IMR-90 (cell line): ENCODE measurements at regions of chr14 and their contacts with region 1.

Region 1: GRCh38 chr14:34496679-34497513 is 34.9 kb upstream of the SPTSSA start:
- DNase-seq: peak; percentile 100
- ATAC-seq: peak; percentile 96
- H3K4me3 ChIP-seq: no peak overlapping the region
- H3K27ac ChIP-seq: peak overlapping the region; percentile 98
- H3K4me1 ChIP-seq: peaks cover 12% of the 10 kb centered on the region
- H3K27me3 ChIP-seq: no peaks in the 10 kb centered on the region
- CTCF ChIP-seq: peak; percentile 38
- POLR2A ChIP-seq: peak; percentile 91
- RAD21 ChIP-seq: peak; percentile 49

Region 2: GRCh38 chr14:34331728-34332623 is 164.9 kb before region 1 on chr14:
- CTCF ChIA-PET with region 1: no interaction called
- POLR2A ChIA-PET with region 1: no interaction called
- dilution Hi-C with region 1: no loop called
- in situ Hi-C with region 1: no loop called
- intact Hi-C with region 1: loop called (anchors 1 kb)
- DNase-seq: peak; percentile 62
- ATAC-seq: peak; percentile 77
- H3K4me3 ChIP-seq: no peak overlapping the region
- H3K27ac ChIP-seq: no peak overlapping the region
- H3K4me1 ChIP-seq: peaks cover 3% of the 10 kb centered on the region; the same call in 1 of the 2 replicates
- H3K27me3 ChIP-seq: no peaks in the 10 kb centered on the region
- CTCF ChIP-seq: peak; percentile 61
- POLR2A ChIP-seq: no peak
- RAD21 ChIP-seq: peak; percentile 65

Region 3: GRCh38 chr14:34365309-34365915 is 131.5 kb before region 1 on chr14:
- CTCF ChIA-PET with region 1: no interaction called
- POLR2A ChIA-PET with region 1: no interaction called
- dilution Hi-C with region 1: no loop called
- in situ Hi-C with region 1: no loop called
- intact Hi-C with region 1: loop called (anchors 10 kb)
- DNase-seq: peak; percentile 13
- ATAC-seq: 0 out of 2 replicates have a peak, but pooled peaks have one; percentile 53
- H3K4me3 ChIP-seq: no peak overlapping the region
- H3K27ac ChIP-seq: no peak overlapping the region
- H3K4me1 ChIP-seq: peaks cover 9% of the 10 kb centered on the region; the same call in 1 of the 2 replicates
- H3K27me3 ChIP-seq: no peaks in the 10 kb centered on the region
- CTCF ChIP-seq: 0 out of 2 replicates have a peak, but pooled peaks have one; percentile 26
- POLR2A ChIP-seq: no peak
- RAD21 ChIP-seq: peak; percentile 23; the same call in 1 of the 2 replicates

Region 4: DNA sequence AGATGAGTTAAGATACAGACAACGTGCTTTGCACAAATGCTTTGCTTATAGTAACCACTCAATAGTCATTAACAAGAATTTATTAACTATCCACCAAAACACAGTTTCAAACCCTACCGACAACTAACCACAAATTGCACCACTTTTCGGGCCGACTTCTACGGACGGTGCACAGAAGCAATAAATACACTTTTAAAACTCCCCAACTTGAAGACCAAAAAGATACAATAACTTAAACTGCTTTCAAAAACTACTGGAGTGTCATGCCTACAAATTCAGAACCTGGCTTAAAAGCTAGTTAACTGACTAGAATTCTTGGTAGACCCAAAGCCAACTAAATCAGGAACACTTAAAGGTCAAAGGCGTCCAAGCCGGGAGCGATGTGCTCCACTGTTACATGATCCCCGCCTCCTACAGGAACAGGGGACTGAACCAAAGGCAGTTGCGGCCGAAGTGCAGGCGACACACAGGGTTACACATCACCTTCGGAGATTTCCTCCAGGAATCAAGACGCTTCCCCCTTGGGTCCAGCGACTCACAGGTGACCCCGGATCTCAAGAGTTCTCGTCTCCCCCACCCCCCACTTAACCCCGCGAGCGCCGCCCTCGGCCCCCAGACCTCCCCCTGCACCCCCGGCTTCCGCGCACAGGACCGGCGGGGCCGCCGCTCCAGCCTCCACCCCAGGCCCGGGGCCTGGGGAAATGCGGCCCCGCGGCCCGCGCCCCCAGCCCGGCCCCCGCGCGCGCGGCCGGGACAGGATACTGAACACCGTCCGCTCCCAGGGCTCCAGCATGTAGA is 35.4 kb before region 1 on chr14:
- CTCF ChIA-PET with region 1: no interaction called
- POLR2A ChIA-PET with region 1: no interaction called
- dilution Hi-C with region 1: no loop called
- in situ Hi-C with region 1: loop called (anchors 5 kb)
- intact Hi-C with region 1: loop called (anchors 1 kb)
- DNase-seq: peak; percentile 52
- ATAC-seq: peak; percentile 36
- H3K4me3 ChIP-seq: peak overlapping the region; percentile 82
- H3K27ac ChIP-seq: peak overlapping the region; percentile 80
- H3K4me1 ChIP-seq: peaks cover 6% of the 10 kb centered on the region
- H3K27me3 ChIP-seq: no peaks in the 10 kb centered on the region
- CTCF ChIP-seq: no peak
- POLR2A ChIP-seq: no peak
- RAD21 ChIP-seq: no peak

Region 5: GRCh38 chr14:35600253-35600652 is 1103.4 kb after region 1 on chr14:
- CTCF ChIA-PET with region 1: no interaction called
- POLR2A ChIA-PET with region 1: no interaction called
- dilution Hi-C with region 1: no loop called
- in situ Hi-C with region 1: no loop called
- intact Hi-C with region 1: no loop called
- DNase-seq: no peak
- ATAC-seq: no peak
- H3K4me3 ChIP-seq: no peak overlapping the region
- H3K27ac ChIP-seq: no peak overlapping the region
- H3K4me1 ChIP-seq: no peaks in the 10 kb centered on the region
- H3K27me3 ChIP-seq: no peaks in the 10 kb centered on the region
- CTCF ChIP-seq: no peak
- POLR2A ChIP-seq: no peak
- RAD21 ChIP-seq: no peak